Left ventricle myocardium inferior (tissue), 1 donor: ENCODE measurements at regions of chr5 and their contacts with region 1.

Region 1: GRCh38 chr5:82165740-82166530 is 112.2 kb downstream of the RPS23 start:
- DNase-seq: peak; percentile 59
- H3K4me3 ChIP-seq: no peak overlapping the region
- H3K27ac ChIP-seq: peak overlapping the region; percentile 61
- H3K4me1 ChIP-seq: peaks cover 19% of the 10 kb centered on the region
- H3K27me3 ChIP-seq: no peaks in the 10 kb centered on the region
- CTCF ChIP-seq: peak; percentile 81

Region 2: GRCh38 chr5:80736730-80737129 is 1429.2 kb before region 1 on chr5:
- intact Hi-C with region 1: no loop called
- DNase-seq: no peak
- H3K4me3 ChIP-seq: no peak overlapping the region
- H3K27ac ChIP-seq: no peak overlapping the region
- H3K4me1 ChIP-seq: no peaks in the 10 kb centered on the region
- H3K27me3 ChIP-seq: no peaks in the 10 kb centered on the region
- CTCF ChIP-seq: no peak

Region 3: GRCh38 chr5:81425569-81425968 is 740.4 kb before region 1 on chr5:
- intact Hi-C with region 1: loop called (anchors 10 kb)
- DNase-seq: no peak
- H3K4me3 ChIP-seq: no peak overlapping the region
- H3K27ac ChIP-seq: no peak overlapping the region
- H3K4me1 ChIP-seq: peaks cover 24% of the 10 kb centered on the region
- H3K27me3 ChIP-seq: no peaks in the 10 kb centered on the region
- CTCF ChIP-seq: peak; percentile 72

Region 4: GRCh38 chr5:82334856-82335255 is 168.9 kb after region 1 on chr5:
- intact Hi-C with region 1: no loop called
- DNase-seq: no peak
- H3K4me3 ChIP-seq: no peak overlapping the region
- H3K27ac ChIP-seq: peak overlapping the region; percentile 76
- H3K4me1 ChIP-seq: peaks cover 59% of the 10 kb centered on the region
- H3K27me3 ChIP-seq: no peaks in the 10 kb centered on the region
- CTCF ChIP-seq: no peak

Region 5: DNA sequence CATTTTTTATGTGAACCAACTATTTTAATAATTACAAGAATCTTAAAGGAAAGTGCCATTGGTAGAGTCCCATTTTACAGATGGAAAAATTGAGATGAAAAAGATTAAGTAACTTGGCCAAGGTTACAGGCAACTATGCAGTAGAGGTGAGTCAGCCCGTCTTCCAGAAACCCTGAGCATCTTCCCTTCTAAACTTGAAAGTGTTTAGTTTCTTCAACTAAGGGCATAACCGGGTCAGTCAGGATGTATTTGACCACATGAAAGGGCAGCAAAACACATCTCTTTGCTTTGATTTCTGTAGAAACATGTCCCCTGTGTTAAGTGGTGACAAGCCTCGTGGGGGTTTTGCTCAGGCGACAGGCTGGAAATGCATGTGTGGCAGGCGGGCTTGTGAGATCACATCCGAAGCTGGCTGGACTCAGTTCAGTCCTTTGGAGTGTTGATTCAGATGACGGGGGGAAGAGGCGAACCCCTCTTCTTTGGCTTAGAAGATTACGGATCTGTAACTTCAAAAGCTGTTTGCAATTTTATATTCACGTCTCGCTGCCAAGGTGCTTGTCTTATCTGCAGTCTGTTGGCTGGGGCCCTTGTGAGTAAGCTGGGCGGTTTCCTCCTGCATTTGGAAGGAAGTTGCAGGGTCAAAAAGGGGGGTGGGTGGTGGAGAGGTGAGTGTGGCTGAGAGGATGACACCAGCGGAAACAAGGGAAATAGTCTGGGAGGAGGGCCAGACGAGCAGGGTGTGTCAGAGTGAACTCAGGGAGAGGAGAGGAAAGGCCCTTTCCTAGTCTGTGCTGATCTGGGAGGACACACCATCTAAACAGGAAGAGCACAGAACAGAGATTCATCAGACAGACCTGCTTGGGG is 191.1 kb after region 1 on chr5:
- intact Hi-C with region 1: no loop called
- DNase-seq: peak; percentile 78
- H3K4me3 ChIP-seq: peak overlapping the region; percentile 6
- H3K27ac ChIP-seq: peak overlapping the region; percentile 82
- H3K4me1 ChIP-seq: peaks cover 44% of the 10 kb centered on the region
- H3K27me3 ChIP-seq: no peaks in the 10 kb centered on the region
- CTCF ChIP-seq: no peak